ENCODE measurements at regions of chr6 and their contacts with region 1.

Region 1: GRCh38 chr6:155493694-155494143 is 38.1 kb upstream of the NOX3 start:
- DNase-seq: peak; percentile 100
- ATAC-seq: peak; percentile 73
- H3K4me3 ChIP-seq: no peak overlapping the region
- H3K27ac ChIP-seq: no peak overlapping the region; the same call in 1 of the 2 replicates
- H3K4me1 ChIP-seq: peaks cover 18% of the 10 kb centered on the region
- H3K27me3 ChIP-seq: no peaks in the 10 kb centered on the region
- CTCF ChIP-seq: no peak
- POLR2A ChIP-seq: 0 out of 2 replicates have a peak, but pooled peaks have one; percentile 39
- RAD21 ChIP-seq: no peak

Region 2: DNA sequence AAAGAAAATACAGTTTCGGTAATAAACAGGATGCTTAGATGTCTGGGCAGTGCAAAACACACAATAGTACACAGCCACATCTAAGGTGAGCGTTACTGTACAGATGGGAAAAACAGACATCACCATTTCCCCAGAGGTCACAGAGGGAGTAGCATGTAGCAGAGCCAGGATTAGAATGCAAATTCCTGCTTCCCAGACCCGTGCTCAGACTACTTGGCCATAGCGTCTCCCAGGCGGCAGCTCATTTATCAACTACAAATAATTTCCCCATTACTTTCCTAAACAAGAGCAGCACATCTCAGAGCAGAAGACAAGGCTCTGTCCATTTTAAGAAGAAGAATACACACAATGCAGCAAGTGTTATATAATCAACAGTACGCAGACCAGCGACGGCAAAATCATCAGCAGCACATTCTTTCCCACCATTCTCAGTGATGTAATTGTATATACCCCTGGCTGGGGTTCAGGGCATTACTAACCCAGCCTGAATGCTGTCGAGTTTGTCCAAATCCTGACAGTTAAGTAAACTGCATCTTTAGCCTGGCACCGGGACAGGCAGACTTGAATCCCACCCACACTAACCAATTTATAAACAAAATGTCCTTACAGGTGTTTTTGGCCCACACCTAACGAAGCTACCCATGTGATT is 1045.1 kb before region 1 on chr6:
- CTCF ChIA-PET with region 1: no interaction called
- POLR2A ChIA-PET with region 1: no interaction called
- dilution Hi-C with region 1: no loop called
- in situ Hi-C with region 1: no loop called
- intact Hi-C with region 1: no loop called
- DNase-seq: peak; percentile 93
- ATAC-seq: peak; percentile 91
- H3K4me3 ChIP-seq: no peak overlapping the region
- H3K27ac ChIP-seq: no peak overlapping the region
- H3K4me1 ChIP-seq: peaks cover 8% of the 10 kb centered on the region
- H3K27me3 ChIP-seq: no peaks in the 10 kb centered on the region
- CTCF ChIP-seq: 0 out of 2 replicates have a peak, but pooled peaks have one; percentile 12
- POLR2A ChIP-seq: no peak
- RAD21 ChIP-seq: peak; percentile 33; the same call in 1 of the 2 replicates

Region 3: DNA sequence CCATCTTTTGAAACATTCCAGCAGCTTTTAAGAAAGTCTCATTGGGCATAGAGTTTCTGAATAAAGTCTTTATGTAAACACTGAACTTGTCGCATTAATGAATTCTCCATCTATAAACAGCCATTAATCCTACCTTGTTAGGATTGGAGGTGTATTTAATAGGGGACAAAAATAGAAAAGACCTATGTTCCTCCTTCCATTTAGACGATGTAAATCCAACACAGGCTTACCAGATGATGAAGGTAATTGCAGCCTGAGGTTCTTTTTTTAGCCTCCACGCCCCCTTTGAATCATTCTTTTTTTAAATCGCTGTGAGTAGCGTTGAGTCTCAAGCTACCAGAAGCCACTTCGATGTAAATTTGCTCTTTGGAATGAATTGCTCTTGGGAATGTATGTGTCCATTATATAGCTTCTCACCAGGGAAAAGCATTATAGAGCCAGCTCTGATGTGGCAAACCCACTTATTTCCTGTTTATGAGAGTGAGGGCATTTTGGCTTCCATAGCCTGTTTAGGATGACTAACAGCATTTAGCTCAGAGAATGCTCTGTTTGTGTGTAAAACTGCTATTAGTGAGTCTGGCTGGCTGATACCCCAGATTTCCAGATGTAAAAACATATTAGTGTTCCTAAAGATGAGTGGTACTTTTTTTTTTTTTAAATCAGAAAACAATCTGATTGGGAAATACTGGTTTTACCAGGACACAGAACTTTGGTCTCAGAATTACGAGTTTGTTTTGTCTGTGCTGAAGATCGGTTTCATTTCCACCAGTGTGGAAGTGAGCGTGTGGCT is 304.8 kb before region 1 on chr6:
- CTCF ChIA-PET with region 1: no interaction called
- POLR2A ChIA-PET with region 1: no interaction called
- dilution Hi-C with region 1: no loop called
- in situ Hi-C with region 1: loop called (anchors 10 kb)
- intact Hi-C with region 1: no loop called
- DNase-seq: peak; percentile 100
- ATAC-seq: peak; percentile 86
- H3K4me3 ChIP-seq: peak overlapping the region; percentile 2; the same call in 1 of the 2 replicates
- H3K27ac ChIP-seq: peak overlapping the region; percentile 41
- H3K4me1 ChIP-seq: peaks cover 19% of the 10 kb centered on the region
- H3K27me3 ChIP-seq: no peaks in the 10 kb centered on the region
- CTCF ChIP-seq: no peak
- POLR2A ChIP-seq: peak; percentile 45; the same call in 1 of the 2 replicates
- RAD21 ChIP-seq: no peak

Region 4: DNA sequence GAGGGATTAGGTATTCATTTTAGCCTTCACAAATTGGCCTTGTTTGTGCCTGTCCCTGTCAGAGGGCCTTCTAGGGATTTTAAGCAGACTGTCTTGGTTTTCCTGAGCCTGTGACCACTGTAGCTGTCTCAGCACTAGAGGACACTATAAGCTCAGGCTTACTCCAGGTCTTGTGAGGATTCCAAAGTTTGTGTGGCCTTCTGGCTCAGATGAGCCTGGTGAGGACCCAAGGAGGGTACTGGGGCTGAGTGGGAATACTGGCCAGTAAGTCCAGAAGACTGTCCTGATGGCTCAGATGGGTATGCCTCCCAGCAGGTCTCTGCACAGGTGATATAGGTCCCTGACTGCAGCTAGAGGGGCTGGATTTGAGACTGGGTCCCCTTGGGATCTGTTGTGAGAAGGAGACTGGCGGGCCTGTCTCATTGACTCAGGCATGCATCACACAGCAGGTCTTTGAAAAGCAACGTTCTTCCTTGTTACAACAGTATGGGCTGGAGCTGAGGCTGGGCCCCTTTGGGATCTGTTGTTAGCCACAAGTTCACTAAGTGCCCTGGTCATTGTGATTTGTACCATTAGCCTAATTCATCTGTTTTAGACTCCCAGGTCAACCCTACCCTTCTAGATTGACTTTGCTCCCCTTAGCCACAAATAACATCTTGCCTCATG is 153.1 kb before region 1 on chr6:
- CTCF ChIA-PET with region 1: interaction called, 12 read pairs
- POLR2A ChIA-PET with region 1: no interaction called
- dilution Hi-C with region 1: no loop called
- in situ Hi-C with region 1: no loop called
- intact Hi-C with region 1: loop called (anchors 1 kb)
- DNase-seq: peak; percentile 61
- ATAC-seq: peak; percentile 64
- H3K4me3 ChIP-seq: no peak overlapping the region
- H3K27ac ChIP-seq: no peak overlapping the region
- H3K4me1 ChIP-seq: peaks cover 2% of the 10 kb centered on the region; the same call in 1 of the 2 replicates
- H3K27me3 ChIP-seq: no peaks in the 10 kb centered on the region
- CTCF ChIP-seq: peak; percentile 56
- POLR2A ChIP-seq: no peak
- RAD21 ChIP-seq: peak; percentile 78

Region 5: DNA sequence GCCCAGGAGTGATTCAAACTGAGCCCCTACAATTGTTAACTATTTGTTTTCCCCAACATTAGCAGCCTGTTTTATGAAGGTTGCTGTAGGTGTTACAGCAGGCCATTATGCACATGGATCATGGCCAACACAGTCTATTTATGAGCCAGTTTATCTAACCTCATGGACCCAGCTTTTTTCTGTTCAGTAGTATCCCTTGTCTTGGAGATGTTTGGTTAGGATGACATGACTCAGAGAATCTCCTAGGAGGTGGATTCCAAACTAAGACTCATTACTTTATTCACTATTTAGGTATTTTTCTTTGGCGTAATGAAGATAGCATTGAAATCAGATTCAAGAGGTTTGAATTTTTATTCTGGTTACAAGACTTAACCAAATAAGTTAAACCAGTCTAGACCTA is 116.7 kb before region 1 on chr6:
- CTCF ChIA-PET with region 1: no interaction called
- POLR2A ChIA-PET with region 1: no interaction called
- dilution Hi-C with region 1: no loop called
- in situ Hi-C with region 1: no loop called
- intact Hi-C with region 1: loop called (anchors 2 kb)
- DNase-seq: peak; percentile 96
- ATAC-seq: peak; percentile 89
- H3K4me3 ChIP-seq: no peak overlapping the region
- H3K27ac ChIP-seq: no peak overlapping the region
- H3K4me1 ChIP-seq: peaks cover 8% of the 10 kb centered on the region
- H3K27me3 ChIP-seq: no peaks in the 10 kb centered on the region
- CTCF ChIP-seq: no peak
- POLR2A ChIP-seq: no peak
- RAD21 ChIP-seq: no peak

Region 6: GRCh38 chr6:155505608-155505989 is 11.9 kb after region 1 on chr6:
- CTCF ChIA-PET with region 1: no interaction called
- POLR2A ChIA-PET with region 1: no interaction called
- dilution Hi-C with region 1: no loop called
- in situ Hi-C with region 1: no loop called
- intact Hi-C with region 1: no loop called
- DNase-seq: no peak
- ATAC-seq: peak; percentile 37
- H3K4me3 ChIP-seq: no peak overlapping the region
- H3K27ac ChIP-seq: no peak overlapping the region
- H3K4me1 ChIP-seq: peaks cover 9% of the 10 kb centered on the region
- H3K27me3 ChIP-seq: no peaks in the 10 kb centered on the region
- CTCF ChIP-seq: no peak
- POLR2A ChIP-seq: no peak
- RAD21 ChIP-seq: no peak

Region 7: DNA sequence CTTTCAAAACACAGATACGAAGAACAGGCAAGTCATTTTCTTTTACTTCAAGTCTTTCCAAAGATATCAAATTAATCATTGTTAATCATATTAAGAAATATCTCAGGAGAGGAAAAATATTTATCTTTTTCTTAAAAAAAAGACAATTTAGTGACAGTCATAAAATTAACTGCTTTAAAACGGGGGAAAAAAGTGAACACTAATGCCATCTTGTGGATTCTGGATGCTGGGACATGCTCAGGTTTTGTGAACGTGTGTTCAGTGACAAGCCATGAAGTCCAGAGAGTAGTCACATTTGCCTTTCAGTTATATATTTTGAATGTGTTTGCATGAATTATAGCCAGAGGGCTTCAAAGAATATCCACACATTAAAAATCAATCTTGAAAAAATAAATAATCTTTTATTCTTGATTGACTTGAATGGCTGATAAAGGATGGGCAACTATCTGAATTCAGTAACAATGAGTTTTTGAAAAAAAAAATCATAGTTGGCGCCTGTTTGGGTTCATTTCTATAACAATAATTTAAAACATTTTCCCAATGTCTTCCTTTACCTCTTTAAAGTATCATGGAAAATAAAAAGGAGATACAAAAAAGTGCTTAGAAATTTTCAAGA is 36.6 kb after region 1 on chr6:
- CTCF ChIA-PET with region 1: no interaction called
- POLR2A ChIA-PET with region 1: no interaction called
- dilution Hi-C with region 1: no loop called
- in situ Hi-C with region 1: no loop called
- intact Hi-C with region 1: loop called (anchors 1 kb)
- DNase-seq: peak; percentile 60
- ATAC-seq: peak; percentile 54
- H3K4me3 ChIP-seq: no peak overlapping the region
- H3K27ac ChIP-seq: peak overlapping the region; percentile 50; the same call in 1 of the 2 replicates
- H3K4me1 ChIP-seq: 0 out of 2 replicates have a peak, but pooled peaks cover 2% of the 10 kb centered on the region
- H3K27me3 ChIP-seq: no peaks in the 10 kb centered on the region
- CTCF ChIP-seq: peak; percentile 71
- POLR2A ChIP-seq: no peak
- RAD21 ChIP-seq: peak; percentile 81

Measured in IMR-90 (cell line).